CD4-positive, alpha-beta T cell (primary cell): ENCODE measurements at regions of chr17 and their contacts with region 1.

Region 1: DNA sequence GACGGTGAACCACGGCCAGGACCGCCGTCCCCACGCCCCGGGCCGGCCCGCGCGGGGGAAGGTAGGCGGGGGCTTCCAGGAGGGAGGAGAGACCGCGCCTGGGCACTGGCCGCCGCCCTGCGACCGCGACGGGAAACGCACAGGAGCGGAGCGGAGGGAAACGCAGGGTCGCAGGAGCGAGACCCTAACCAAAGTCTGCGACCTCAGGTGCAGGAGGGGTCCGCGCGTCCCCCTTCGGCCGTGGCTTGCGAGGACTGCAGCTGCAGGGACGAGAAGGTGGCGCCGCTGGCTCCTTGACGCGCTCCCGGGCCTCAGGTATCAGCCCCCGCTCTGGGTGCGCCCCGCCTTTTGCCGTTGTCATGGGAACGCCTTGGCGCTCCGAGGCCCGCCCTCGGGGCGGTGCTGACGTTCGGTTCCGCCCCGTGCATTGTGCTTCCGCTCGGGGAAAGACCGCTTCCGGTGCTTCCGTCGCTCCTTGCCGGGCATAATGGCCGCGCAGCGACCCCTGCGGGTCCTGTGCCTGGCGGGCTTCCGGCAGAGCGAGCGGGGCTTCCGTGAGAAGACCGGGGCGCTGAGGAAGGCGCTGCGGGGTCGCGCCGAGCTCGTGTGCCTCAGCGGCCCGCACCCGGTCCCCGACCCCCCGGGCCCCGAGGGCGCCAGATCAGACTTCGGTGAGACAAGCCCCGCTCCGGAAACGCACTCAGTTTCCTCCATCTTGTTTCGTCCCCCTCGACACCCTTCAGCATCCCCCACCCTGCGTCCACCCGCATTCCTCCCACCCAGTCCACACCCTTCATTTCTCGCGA is at the start of gene OVCA2:
- DNase-seq: peak; percentile 96 to 99 (median 97)
- ATAC-seq: peak; percentile 92
- H3K4me3 ChIP-seq: peak within 1 kb of the TSS; percentile 73
- H3K4me3 Mint-ChIP-seq: peak within 1 kb of the TSS; percentile 92
- H3K27ac ChIP-seq: peak within 1 kb of the TSS; percentile 83 to 88
- H3K27ac Mint-ChIP-seq: peak within 1 kb of the TSS; percentile 86
- H3K4me1 ChIP-seq: peaks cover 29% of the 10 kb centered on the region
- H3K4me1 Mint-ChIP-seq: peaks cover 18% of the 10 kb centered on the region
- H3K27me3 ChIP-seq: no peaks in the 10 kb centered on the region
- H3K27me3 Mint-ChIP-seq: no peaks in the 10 kb centered on the region
- CTCF ChIP-seq: peak; percentile 54
- total RNA-seq, gene OVCA2: 34.4 to 35.1 TPM

Region 2: DNA sequence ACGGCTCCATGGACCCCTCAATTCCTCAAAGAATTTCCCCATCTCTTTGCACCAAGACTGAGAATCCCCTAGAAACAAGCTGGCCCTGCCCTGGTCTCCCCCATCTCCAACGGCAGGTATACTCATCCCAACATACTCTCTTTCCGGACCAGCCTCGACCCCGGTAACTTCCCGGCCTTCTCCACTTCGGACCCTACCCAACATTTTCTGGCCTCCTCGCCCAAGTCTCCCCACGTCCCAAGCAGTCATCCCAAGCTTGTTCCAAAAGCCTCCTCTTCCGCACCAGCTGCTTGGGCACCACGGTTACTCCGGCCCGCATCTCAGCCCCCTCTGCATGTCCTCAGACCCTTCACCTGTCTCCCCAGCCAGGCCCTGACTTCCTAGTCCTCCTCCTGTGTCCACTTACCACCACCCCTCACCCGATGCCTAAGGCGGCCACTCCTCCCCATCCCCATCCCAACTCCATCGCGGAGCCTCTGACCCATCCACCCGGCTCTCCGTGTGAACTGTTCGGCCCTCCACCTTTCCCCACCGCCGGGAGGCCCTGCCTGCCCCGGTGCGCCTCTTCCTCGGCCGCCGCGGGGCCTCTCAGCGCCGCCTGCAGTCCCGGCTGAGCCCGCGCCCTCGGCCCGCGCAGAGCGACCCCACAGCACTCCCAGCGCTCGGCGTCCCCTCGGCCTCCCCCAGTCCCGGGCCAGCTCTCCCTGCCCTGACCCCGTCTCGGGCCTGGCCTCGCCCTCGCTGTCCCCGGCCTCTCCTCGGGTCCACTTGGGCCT is 480.2 kb before region 1 on chr17:
- CTCF ChIA-PET with region 1: no interaction called
- POLR2A ChIA-PET with region 1: interaction called, 3 read pairs
- intact Hi-C with region 1: loop called in 1 of 2 experiments (anchors 10 kb)
- DNase-seq: peak in 11 of 14 experiments; percentile 14 to 68 (median 33)
- ATAC-seq: peak; percentile 40
- H3K4me3 ChIP-seq: peak overlapping the region; percentile 51
- H3K4me3 Mint-ChIP-seq: peak overlapping the region; percentile 88
- H3K27ac ChIP-seq: no peak overlapping the region
- H3K27ac Mint-ChIP-seq: peak overlapping the region; percentile 65
- H3K4me1 ChIP-seq: peaks cover 41% of the 10 kb centered on the region
- H3K4me1 Mint-ChIP-seq: peaks cover 37% of the 10 kb centered on the region
- H3K27me3 ChIP-seq: no peaks in the 10 kb centered on the region
- H3K27me3 Mint-ChIP-seq: no peaks in the 10 kb centered on the region
- CTCF ChIP-seq: peak; percentile 23

Region 3: GRCh38 chr17:1684378-1685189 is 357.2 kb before region 1 on chr17 and contains the start of gene PRPF8:
- CTCF ChIA-PET with region 1: no interaction called
- POLR2A ChIA-PET with region 1: interaction called, 3 read pairs
- intact Hi-C with region 1: loop called in 1 of 2 experiments (anchors 10 kb)
- DNase-seq: peak; percentile 97 to 99 (median 98)
- ATAC-seq: peak; percentile 96
- H3K4me3 ChIP-seq: peak within 1 kb of the TSS; percentile 93
- H3K4me3 Mint-ChIP-seq: peak within 1 kb of the TSS; percentile 99
- H3K27ac ChIP-seq: peak within 1 kb of the TSS; percentile 86 to 95
- H3K27ac Mint-ChIP-seq: peak within 1 kb of the TSS; percentile 96
- H3K4me1 ChIP-seq: peaks cover 33% of the 10 kb centered on the region
- H3K4me1 Mint-ChIP-seq: peaks cover 49% of the 10 kb centered on the region
- H3K27me3 ChIP-seq: no peaks in the 10 kb centered on the region
- H3K27me3 Mint-ChIP-seq: no peaks in the 10 kb centered on the region
- CTCF ChIP-seq: no peak
- total RNA-seq, gene PRPF8: 550 to 572 TPM

Region 4: DNA sequence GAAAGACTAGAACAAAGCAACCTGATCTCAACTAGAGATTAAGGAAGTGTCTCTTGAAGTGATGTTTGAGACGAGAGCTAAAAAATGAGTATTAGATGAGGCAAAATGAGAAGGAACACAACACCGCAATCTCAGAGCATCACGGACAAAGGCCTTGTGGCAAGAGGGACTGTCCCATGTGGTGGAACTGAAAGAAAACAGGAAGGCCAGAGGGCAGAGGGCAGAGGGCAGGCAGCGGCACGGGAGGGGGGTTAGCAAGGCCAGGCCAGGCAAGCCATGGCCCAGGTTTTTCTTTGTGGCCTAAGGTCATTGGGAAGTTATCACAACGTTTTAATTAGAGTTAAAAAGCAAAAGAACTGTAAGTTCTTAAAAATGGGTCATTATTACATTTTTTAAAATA is 189.4 kb before region 1 on chr17:
- CTCF ChIA-PET with region 1: no interaction called
- POLR2A ChIA-PET with region 1: no interaction called
- intact Hi-C with region 1: no loop called
- DNase-seq: no peak
- ATAC-seq: no peak
- H3K4me3 ChIP-seq: no peak overlapping the region
- H3K4me3 Mint-ChIP-seq: no peak overlapping the region
- H3K27ac ChIP-seq: no peak overlapping the region
- H3K27ac Mint-ChIP-seq: peak overlapping the region; percentile 45
- H3K4me1 ChIP-seq: no peaks in the 10 kb centered on the region
- H3K4me1 Mint-ChIP-seq: peaks cover 5% of the 10 kb centered on the region
- H3K27me3 ChIP-seq: no peaks in the 10 kb centered on the region
- H3K27me3 Mint-ChIP-seq: no peaks in the 10 kb centered on the region
- CTCF ChIP-seq: no peak

Region 5: GRCh38 chr17:1882836-1883235 is 158.9 kb before region 1 on chr17:
- CTCF ChIA-PET with region 1: no interaction called
- POLR2A ChIA-PET with region 1: no interaction called
- intact Hi-C with region 1: loop called in 1 of 2 experiments (anchors 1 kb)
- DNase-seq: peak in 6 of 14 experiments; percentile 5 to 50 (median 45)
- ATAC-seq: no peak
- H3K4me3 ChIP-seq: no peak overlapping the region
- H3K4me3 Mint-ChIP-seq: no peak overlapping the region
- H3K27ac ChIP-seq: no peak overlapping the region
- H3K27ac Mint-ChIP-seq: no peak overlapping the region
- H3K4me1 ChIP-seq: no peaks in the 10 kb centered on the region
- H3K4me1 Mint-ChIP-seq: no peaks in the 10 kb centered on the region
- H3K27me3 ChIP-seq: no peaks in the 10 kb centered on the region
- H3K27me3 Mint-ChIP-seq: no peaks in the 10 kb centered on the region
- CTCF ChIP-seq: peak; percentile 42

Region 6: GRCh38 chr17:2029911-2030778 is 11.6 kb before region 1 on chr17 and contains the start of gene DPH1:
- CTCF ChIA-PET with region 1: interaction called, 6 read pairs
- POLR2A ChIA-PET with region 1: interaction called, 7 read pairs
- intact Hi-C with region 1: loop called (anchors 1 kb)
- DNase-seq: peak; percentile 74 to 92 (median 81)
- ATAC-seq: peak; percentile 82
- H3K4me3 ChIP-seq: peak within 1 kb of the TSS; percentile 100
- H3K4me3 Mint-ChIP-seq: peak within 1 kb of the TSS; percentile 94
- H3K27ac ChIP-seq: peak within 1 kb of the TSS; percentile 60 to 70
- H3K27ac Mint-ChIP-seq: peak within 1 kb of the TSS; percentile 86
- H3K4me1 ChIP-seq: peaks cover 45% of the 10 kb centered on the region
- H3K4me1 Mint-ChIP-seq: peaks cover 34% of the 10 kb centered on the region
- H3K27me3 ChIP-seq: peaks cover 12 to 16% of the 10 kb centered on the region in 2 experiments
- H3K27me3 Mint-ChIP-seq: peaks cover 26% of the 10 kb centered on the region
- CTCF ChIP-seq: no peak
- total RNA-seq, gene DPH1: 96.4 to 101 TPM

Region 7: GRCh38 chr17:2401426-2402221 is 359.9 kb after region 1 on chr17:
- CTCF ChIA-PET with region 1: no interaction called
- POLR2A ChIA-PET with region 1: no interaction called
- intact Hi-C with region 1: loop called in 1 of 2 experiments (anchors 5 kb)
- DNase-seq: peak; percentile 97 to 99 (median 99)
- ATAC-seq: peak; percentile 58
- H3K4me3 ChIP-seq: peak overlapping the region; percentile 93
- H3K4me3 Mint-ChIP-seq: peak overlapping the region; percentile 100
- H3K27ac ChIP-seq: peak overlapping the region; percentile 93 to 100
- H3K27ac Mint-ChIP-seq: peak overlapping the region; percentile 99
- H3K4me1 ChIP-seq: peaks cover 51% of the 10 kb centered on the region
- H3K4me1 Mint-ChIP-seq: peaks cover 47% of the 10 kb centered on the region
- H3K27me3 ChIP-seq: no peaks in the 10 kb centered on the region
- H3K27me3 Mint-ChIP-seq: no peaks in the 10 kb centered on the region
- CTCF ChIP-seq: no peak